Lower lobe of right lung (tissue), 2 donors: ENCODE measurements at regions of chr5 and their contacts with region 1.

Region 1: GRCh38 chr5:142888469-142889085 is 118.4 kb downstream of the ARHGAP26 start:
- DNase-seq: no peak
- ATAC-seq: peak; percentile 76 to 80
- H3K4me3 ChIP-seq: no peak overlapping the region
- H3K27ac ChIP-seq: no peak overlapping the region
- H3K4me1 ChIP-seq: peaks cover 4% of the 10 kb centered on the region
- H3K27me3 ChIP-seq: no peaks in the 10 kb centered on the region
- CTCF ChIP-seq: peak; percentile 71

Region 2: GRCh38 chr5:142716963-142717362 is 171.6 kb before region 1 on chr5:
- intact Hi-C with region 1: loop called (anchors 5 kb)
- DNase-seq: no peak
- ATAC-seq: peak; percentile 7 to 55
- H3K4me3 ChIP-seq: no peak overlapping the region
- H3K27ac ChIP-seq: no peak overlapping the region
- H3K4me1 ChIP-seq: peaks cover 26% of the 10 kb centered on the region
- H3K27me3 ChIP-seq: no peaks in the 10 kb centered on the region
- CTCF ChIP-seq: peak; percentile 37